CD8-positive, alpha-beta T cell (primary cell): ENCODE measurements at regions of chr2 and their contacts with region 1.

Region 1: GRCh38 chr2:77590298-77590917 is 68.2 kb upstream of the LRRTM4 start:
- DNase-seq: no peak
- ATAC-seq: no peak
- H3K4me3 ChIP-seq: no peak overlapping the region
- H3K4me3 Mint-ChIP-seq: no peak overlapping the region
- H3K27ac ChIP-seq: no peak overlapping the region
- H3K27ac Mint-ChIP-seq: no peak overlapping the region
- H3K4me1 ChIP-seq: no peaks in the 10 kb centered on the region
- H3K4me1 Mint-ChIP-seq: no peaks in the 10 kb centered on the region
- H3K27me3 ChIP-seq: no peaks in the 10 kb centered on the region
- H3K27me3 Mint-ChIP-seq: no peaks in the 10 kb centered on the region
- CTCF ChIP-seq: no peak

Region 2: GRCh38 chr2:77521931-77522470 is 68.4 kb before region 1 on chr2 and contains the start of gene LRRTM4:
- CTCF ChIA-PET with region 1: no interaction called
- POLR2A ChIA-PET with region 1: no interaction called
- intact Hi-C with region 1: loop called in 1 of 2 experiments (anchors 2 kb)
- DNase-seq: no peak
- ATAC-seq: no peak
- H3K4me3 ChIP-seq: no peak within 1 kb of the TSS
- H3K4me3 Mint-ChIP-seq: no peak within 1 kb of the TSS
- H3K27ac ChIP-seq: no peak within 1 kb of the TSS
- H3K27ac Mint-ChIP-seq: no peak within 1 kb of the TSS
- H3K4me1 ChIP-seq: no peaks in the 10 kb centered on the region
- H3K4me1 Mint-ChIP-seq: no peaks in the 10 kb centered on the region
- H3K27me3 ChIP-seq: no peaks in the 10 kb centered on the region
- H3K27me3 Mint-ChIP-seq: no peaks in the 10 kb centered on the region
- CTCF ChIP-seq: no peak
- total RNA-seq, gene LRRTM4: not detected

Region 3: DNA sequence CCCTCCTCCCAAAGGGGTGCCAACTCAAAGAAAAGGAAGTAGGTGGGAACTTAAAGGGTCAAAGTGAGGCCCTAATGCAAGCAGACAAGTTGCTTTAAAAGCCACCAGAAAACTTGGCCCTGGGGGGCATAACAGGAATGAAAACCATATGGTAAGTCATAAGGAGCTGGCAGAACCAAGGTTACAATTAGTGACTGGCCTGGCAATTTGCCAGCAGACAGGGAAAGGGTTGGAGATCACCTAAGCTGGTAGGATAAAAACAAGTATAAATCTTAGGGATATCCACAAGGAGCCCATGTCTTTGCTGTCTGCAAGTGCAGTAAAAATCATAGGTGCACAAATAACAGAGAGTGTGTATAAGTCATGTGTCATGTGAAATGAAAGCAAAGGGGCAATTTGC is 188.5 kb after region 1 on chr2:
- CTCF ChIA-PET with region 1: no interaction called
- POLR2A ChIA-PET with region 1: no interaction called
- intact Hi-C with region 1: no loop called
- DNase-seq: no peak
- ATAC-seq: no peak
- H3K4me3 ChIP-seq: no peak overlapping the region
- H3K4me3 Mint-ChIP-seq: no peak overlapping the region
- H3K27ac ChIP-seq: no peak overlapping the region
- H3K27ac Mint-ChIP-seq: no peak overlapping the region
- H3K4me1 ChIP-seq: no peaks in the 10 kb centered on the region
- H3K4me1 Mint-ChIP-seq: no peaks in the 10 kb centered on the region
- H3K27me3 ChIP-seq: no peaks in the 10 kb centered on the region
- H3K27me3 Mint-ChIP-seq: no peaks in the 10 kb centered on the region
- CTCF ChIP-seq: no peak